Heart right ventricle (tissue), 16 donors: ENCODE measurements at regions of chr6 and their contacts with region 1.

Region 1: DNA sequence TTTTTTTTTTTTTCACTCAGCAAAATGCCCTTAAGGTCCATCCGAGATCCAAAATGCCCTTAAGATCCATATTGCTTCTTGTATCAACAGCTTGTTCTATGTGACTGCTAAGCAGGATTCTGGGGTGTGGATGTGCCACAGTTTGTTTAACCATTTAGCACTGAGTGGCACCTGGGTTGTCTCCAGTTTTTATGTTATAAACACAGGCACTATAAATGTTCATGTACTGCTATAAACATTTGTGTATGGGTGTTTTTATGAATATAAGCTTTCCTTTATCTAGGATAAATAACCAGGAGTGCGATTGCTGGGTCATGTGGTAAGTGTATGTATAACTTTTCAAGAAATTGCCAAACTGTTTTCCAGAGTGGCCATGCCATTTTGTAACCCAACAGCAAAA is 386.0 kb downstream of the RNGTT start:
- DNase-seq: no peak
- ATAC-seq: no peak
- H3K4me3 ChIP-seq: no peak overlapping the region
- H3K27ac ChIP-seq: no peak overlapping the region
- H3K4me1 ChIP-seq: no peaks in the 10 kb centered on the region
- H3K27me3 ChIP-seq: peaks cover 0 to under 1% (median 0%) of the 10 kb centered on the region in 7 donors
- CTCF ChIP-seq: no peak

Region 2: DNA sequence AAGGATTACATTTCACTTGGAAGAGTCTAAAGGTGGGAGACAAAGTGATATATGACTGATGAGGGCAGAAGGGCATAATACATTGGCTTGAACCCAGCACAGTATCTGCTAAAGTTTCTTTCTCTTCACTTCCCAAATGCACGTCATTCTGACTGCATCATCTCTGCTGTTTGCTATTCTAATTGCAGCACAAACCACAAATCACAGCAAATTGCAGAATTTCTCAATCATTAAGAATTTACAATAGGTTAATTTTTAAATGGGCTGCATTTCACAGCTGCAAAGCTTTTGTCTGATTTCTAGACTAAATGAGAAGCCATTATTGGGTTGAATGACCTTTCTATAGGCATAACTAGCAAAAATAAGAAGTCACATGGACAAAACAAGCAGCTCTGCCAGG is 49.0 kb after region 1 on chr6:
- intact Hi-C with region 1: loop called in 1 of 10 experiments (anchors 2 kb)
- DNase-seq: no peak
- ATAC-seq: no peak
- H3K4me3 ChIP-seq: no peak overlapping the region
- H3K27ac ChIP-seq: no peak overlapping the region
- H3K4me1 ChIP-seq: no peaks in the 10 kb centered on the region
- H3K27me3 ChIP-seq: no peaks in the 10 kb centered on the region
- CTCF ChIP-seq: no peak

Region 3: DNA sequence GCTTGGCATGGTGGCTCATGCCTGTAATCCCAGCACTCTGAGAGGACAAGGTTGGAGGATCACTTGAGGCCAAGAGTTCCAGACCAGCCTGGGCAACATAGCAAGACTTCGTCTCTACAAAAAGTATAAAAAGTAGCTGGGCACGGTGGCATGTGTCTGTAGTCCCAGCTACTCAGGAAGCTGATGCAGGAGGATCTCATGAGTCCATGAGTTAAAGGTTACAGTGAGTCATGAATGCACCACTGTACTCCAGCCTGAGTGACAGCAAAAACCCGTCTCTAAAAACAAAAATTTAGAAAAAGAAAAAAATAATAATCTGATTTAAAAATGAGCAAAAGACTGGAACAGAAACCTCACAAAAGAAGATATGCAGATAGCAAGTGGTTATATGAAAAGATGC is 106.3 kb after region 1 on chr6:
- intact Hi-C with region 1: no loop called
- DNase-seq: no peak
- ATAC-seq: no peak
- H3K4me3 ChIP-seq: no peak overlapping the region
- H3K27ac ChIP-seq: no peak overlapping the region
- H3K4me1 ChIP-seq: no peaks in the 10 kb centered on the region
- H3K27me3 ChIP-seq: no peaks in the 10 kb centered on the region
- CTCF ChIP-seq: no peak